ENCODE measurements at regions of chr17 and their contacts with region 1.

Region 1: GRCh38 chr17:35119368-35120165 is at the start of gene RAD51D:
- DNase-seq: peak; percentile 78
- H3K4me3 Mint-ChIP-seq: peak within 1 kb of the TSS; percentile 90
- H3K27ac Mint-ChIP-seq: peak within 1 kb of the TSS; percentile 86
- H3K4me1 Mint-ChIP-seq: peaks cover 42% of the 10 kb centered on the region
- H3K27me3 Mint-ChIP-seq: no peaks in the 10 kb centered on the region
- total RNA-seq, gene RAD51D: 31.5 to 33.0 TPM

Region 2: GRCh38 chr17:34542700-34543336 is 576.7 kb before region 1 on chr17:
- CTCF ChIA-PET with region 1: interaction called, 15 read pairs
- intact Hi-C with region 1: loop called (anchors 1 kb)
- DNase-seq: peak; percentile 68
- H3K4me3 Mint-ChIP-seq: no peak overlapping the region
- H3K27ac Mint-ChIP-seq: no peak overlapping the region
- H3K4me1 Mint-ChIP-seq: no peaks in the 10 kb centered on the region
- H3K27me3 Mint-ChIP-seq: peaks cover 29% of the 10 kb centered on the region

Region 3: GRCh38 chr17:34626141-34626681 is 493.4 kb before region 1 on chr17:
- CTCF ChIA-PET with region 1: no interaction called
- intact Hi-C with region 1: loop called (anchors 2 kb)
- DNase-seq: peak; percentile 24
- H3K4me3 Mint-ChIP-seq: no peak overlapping the region
- H3K27ac Mint-ChIP-seq: no peak overlapping the region
- H3K4me1 Mint-ChIP-seq: no peaks in the 10 kb centered on the region
- H3K27me3 Mint-ChIP-seq: peaks cover 53% of the 10 kb centered on the region

Region 4: GRCh38 chr17:34852614-34853013 is 267.0 kb before region 1 on chr17:
- CTCF ChIA-PET with region 1: no interaction called
- intact Hi-C with region 1: no loop called
- DNase-seq: no peak
- H3K4me3 Mint-ChIP-seq: no peak overlapping the region
- H3K27ac Mint-ChIP-seq: no peak overlapping the region
- H3K4me1 Mint-ChIP-seq: no peaks in the 10 kb centered on the region
- H3K27me3 Mint-ChIP-seq: no peaks in the 10 kb centered on the region

Region 5: GRCh38 chr17:34980681-34981537 is 138.7 kb before region 1 on chr17:
- CTCF ChIA-PET with region 1: interaction called, 18 read pairs
- intact Hi-C with region 1: loop called (anchors 1 kb)
- DNase-seq: peak; percentile 72
- H3K4me3 Mint-ChIP-seq: peak overlapping the region; percentile 95
- H3K27ac Mint-ChIP-seq: peak overlapping the region; percentile 91
- H3K4me1 Mint-ChIP-seq: peaks cover 43% of the 10 kb centered on the region
- H3K27me3 Mint-ChIP-seq: no peaks in the 10 kb centered on the region

Region 6: GRCh38 chr17:34998205-34998604 is 121.4 kb before region 1 on chr17:
- CTCF ChIA-PET with region 1: interaction called, 62 read pairs
- intact Hi-C with region 1: loop called (anchors 1 kb)
- DNase-seq: peak; percentile 88
- H3K4me3 Mint-ChIP-seq: no peak overlapping the region
- H3K27ac Mint-ChIP-seq: peak overlapping the region; percentile 83
- H3K4me1 Mint-ChIP-seq: peaks cover 6% of the 10 kb centered on the region
- H3K27me3 Mint-ChIP-seq: no peaks in the 10 kb centered on the region